ENCODE measurements at regions of chr11 and their contacts with region 1.

Region 1: DNA sequence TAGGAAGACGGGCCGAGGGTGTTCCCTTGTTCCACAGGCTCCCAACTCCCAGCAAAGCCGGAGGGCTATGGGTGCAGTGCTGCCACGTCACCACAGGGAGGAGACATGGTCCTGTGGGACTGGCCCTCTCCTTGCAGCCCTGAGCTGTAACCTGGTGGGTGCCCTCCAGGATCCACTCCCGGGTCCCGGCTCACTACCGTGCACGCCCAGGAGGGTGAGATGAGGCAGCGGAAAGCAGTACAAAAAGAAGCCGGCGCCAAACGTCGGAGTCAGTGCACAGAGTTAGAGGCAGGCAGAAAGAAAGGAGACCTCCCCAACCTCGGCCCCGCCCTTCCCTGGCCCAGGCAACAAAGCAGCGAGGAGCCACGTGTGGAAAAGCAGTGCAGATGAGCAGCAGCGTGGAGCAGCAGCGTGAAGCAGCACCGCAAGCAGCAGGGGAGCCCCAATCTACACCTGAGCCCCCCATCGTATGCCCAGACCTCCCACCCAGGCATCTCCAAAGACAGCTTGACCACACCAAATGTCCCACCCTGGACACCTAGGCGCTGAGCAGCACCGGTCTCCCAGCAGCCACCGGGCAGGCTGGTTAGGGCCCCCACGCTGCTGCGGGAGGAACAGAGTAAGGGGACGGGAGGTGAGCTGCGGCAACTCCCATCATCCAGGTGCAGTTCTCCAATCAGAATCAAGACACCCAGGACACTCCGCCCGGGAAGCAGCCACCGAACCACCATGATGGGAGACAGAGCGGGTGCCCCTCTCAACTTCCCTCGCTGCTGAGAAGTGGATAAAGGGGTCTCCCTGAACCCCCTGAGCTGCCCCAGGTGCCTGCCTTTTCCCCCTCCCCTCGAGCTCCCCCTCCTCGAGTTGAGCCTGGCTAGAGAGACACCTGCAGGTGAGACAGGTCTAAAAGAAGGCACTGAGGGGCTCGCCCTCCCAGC is 28.8 kb downstream of the IGSF9B start:
- DNase-seq: peak; percentile 71
- H3K4me3 ChIP-seq: peak overlapping the region in 1 of 2 donors; percentile 20
- H3K27ac ChIP-seq: peak overlapping the region in 1 of 2 donors; percentile 26
- H3K4me1 ChIP-seq: no peaks in the 10 kb centered on the region
- H3K27me3 ChIP-seq: no peaks in the 10 kb centered on the region
- CTCF ChIP-seq: peak; percentile 61 to 93 (median 81)
- POLR2A ChIP-seq: no peak

Region 2: DNA sequence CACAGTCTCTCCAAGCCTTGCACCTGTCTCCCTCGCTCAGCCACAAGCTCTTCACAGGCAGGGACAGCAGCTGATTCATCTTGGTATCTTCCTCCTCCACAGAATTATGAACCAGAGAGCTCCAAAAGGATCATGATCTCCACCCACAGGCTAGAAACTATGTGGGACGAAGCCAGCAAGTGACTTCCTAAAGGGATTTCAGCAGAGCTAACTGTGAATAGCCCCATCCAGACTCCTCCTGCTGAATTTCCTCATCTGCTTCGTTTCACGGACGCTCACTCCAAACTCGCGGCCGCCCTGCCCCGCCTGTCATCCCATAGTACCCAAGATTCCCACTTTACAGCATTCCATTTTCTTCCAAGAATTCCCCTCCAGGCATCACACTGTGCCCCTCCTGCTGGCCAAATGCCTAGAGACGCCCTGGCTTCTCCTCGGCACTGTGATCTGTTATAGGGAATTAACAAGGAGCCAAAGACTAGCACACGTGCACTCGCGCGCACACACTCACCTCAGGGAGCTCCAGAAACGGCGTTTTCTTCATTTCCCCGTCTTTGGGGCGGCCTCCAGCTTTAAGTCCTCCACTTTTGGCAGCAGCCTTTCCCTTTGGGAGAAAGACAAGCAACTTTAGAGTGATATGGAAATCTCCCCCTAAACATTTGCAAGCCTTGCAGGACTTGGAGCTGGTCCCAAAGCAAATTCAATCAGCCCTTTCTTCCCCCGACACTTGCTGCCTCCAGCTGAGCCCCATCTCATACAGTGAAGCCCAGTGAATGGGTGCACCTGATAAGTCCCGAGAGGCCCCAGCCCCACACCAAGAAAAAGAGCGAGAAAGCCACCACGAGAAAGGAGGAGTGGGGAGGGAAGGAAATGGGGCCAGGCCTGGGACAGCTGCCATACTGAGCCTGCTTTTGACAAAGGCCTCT is 118.1 kb before region 1 on chr11:
- intact Hi-C with region 1: no loop called
- DNase-seq: no peak
- H3K4me3 ChIP-seq: no peak overlapping the region
- H3K27ac ChIP-seq: no peak overlapping the region
- H3K4me1 ChIP-seq: no peaks in the 10 kb centered on the region
- H3K27me3 ChIP-seq: peaks cover 4% of the 10 kb centered on the region
- CTCF ChIP-seq: no peak
- POLR2A ChIP-seq: no peak

Region 3: DNA sequence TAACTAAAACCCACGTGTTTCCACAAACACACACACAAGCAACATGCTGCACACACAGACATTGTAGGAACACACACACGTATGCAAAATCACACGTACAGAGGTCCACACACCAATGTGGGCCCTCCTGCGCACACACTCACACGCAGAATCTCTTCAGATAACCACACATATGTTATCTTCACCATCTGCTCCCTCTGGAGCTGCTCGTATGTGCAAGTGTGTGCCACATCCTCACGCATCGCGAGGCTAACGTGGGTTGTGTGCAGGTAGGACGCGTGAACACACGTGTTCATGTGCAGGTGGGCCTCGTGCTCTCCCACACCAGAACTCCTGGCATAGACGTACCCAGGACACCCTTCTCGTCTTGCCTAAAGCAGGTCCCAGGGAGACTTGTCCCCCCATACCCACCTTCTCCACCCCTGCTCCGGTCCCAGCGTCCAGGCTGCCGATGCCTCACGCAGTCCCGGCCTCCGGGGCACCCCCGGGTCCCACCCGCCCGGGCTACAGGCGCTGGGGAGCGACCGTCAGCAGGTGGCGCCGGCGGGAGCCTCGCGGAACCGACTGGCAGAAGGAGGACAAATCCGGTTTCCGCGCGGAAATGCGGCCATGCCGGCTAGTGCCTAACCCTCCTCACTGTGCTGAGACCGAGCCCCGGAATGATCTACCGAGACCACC is 39.1 kb after region 1 on chr11:
- intact Hi-C with region 1: loop called (anchors 5 kb)
- DNase-seq: no peak
- H3K4me3 ChIP-seq: no peak overlapping the region
- H3K27ac ChIP-seq: no peak overlapping the region
- H3K4me1 ChIP-seq: no peaks in the 10 kb centered on the region
- H3K27me3 ChIP-seq: no peaks in the 10 kb centered on the region
- CTCF ChIP-seq: no peak
- POLR2A ChIP-seq: no peak

Region 4: GRCh38 chr11:134050541-134051383 is 122.8 kb after region 1 on chr11:
- intact Hi-C with region 1: loop called (anchors 2 kb)
- DNase-seq: peak; percentile 60
- H3K4me3 ChIP-seq: peak overlapping the region in 1 of 2 donors; percentile 10
- H3K27ac ChIP-seq: peak overlapping the region in 1 of 2 donors; percentile 62
- H3K4me1 ChIP-seq: no peaks in the 10 kb centered on the region
- H3K27me3 ChIP-seq: no peaks in the 10 kb centered on the region
- CTCF ChIP-seq: peak; percentile 87 to 93 (median 90)
- POLR2A ChIP-seq: no peak

Region 5: DNA sequence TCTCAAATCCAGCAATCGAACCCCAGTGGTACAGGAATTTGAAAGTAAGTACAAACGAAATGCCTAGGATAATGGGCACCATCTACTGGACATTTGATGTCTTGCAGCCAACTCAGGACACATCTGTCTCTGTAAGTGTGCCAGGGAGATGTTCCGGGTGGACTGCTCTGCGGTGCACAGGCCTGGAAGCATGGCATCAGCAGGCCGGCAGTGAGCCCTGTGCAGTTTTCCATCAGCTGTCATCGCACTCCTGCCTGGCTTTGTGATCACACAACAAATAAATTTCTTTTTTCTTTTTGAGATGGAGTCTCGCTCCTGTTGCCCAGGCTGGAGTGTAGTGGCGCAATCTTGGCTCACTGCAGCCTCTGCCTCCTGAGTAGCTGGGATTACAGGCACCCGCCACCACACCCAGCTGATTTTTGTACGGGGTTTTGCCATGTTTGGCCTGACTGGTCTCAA is 211.9 kb after region 1 on chr11:
- intact Hi-C with region 1: loop called (anchors 5 kb)
- DNase-seq: peak; percentile 70
- H3K4me3 ChIP-seq: no peak overlapping the region
- H3K27ac ChIP-seq: no peak overlapping the region
- H3K4me1 ChIP-seq: no peaks in the 10 kb centered on the region
- H3K27me3 ChIP-seq: no peaks in the 10 kb centered on the region
- CTCF ChIP-seq: peak; percentile 76 to 87 (median 84)
- POLR2A ChIP-seq: no peak

Region 6: GRCh38 chr11:134253188-134253993 is 325.4 kb after region 1 on chr11 and contains the starts of genes ACAD8 and THYN1:
- intact Hi-C with region 1: loop called (anchors 5 kb)
- DNase-seq: peak; percentile 96
- H3K4me3 ChIP-seq: peak within 1 kb of the TSS; percentile 88 to 89
- H3K27ac ChIP-seq: peak within 1 kb of the TSS; percentile 78 to 79
- H3K4me1 ChIP-seq: peaks cover 2% of the 10 kb centered on the region
- H3K27me3 ChIP-seq: no peaks in the 10 kb centered on the region
- CTCF ChIP-seq: peak in 2 of 4 experiments; percentile 64 to 67
- POLR2A ChIP-seq: peak; percentile 64
- total RNA-seq, gene ACAD8: 39.4 to 46.1 TPM
- total RNA-seq, gene THYN1: 48.5 to 59.7 TPM

Measured in prostate gland (tissue), 2 donors.